ENCODE measurements at regions of chr5 and their contacts with region 1.

Region 1: DNA sequence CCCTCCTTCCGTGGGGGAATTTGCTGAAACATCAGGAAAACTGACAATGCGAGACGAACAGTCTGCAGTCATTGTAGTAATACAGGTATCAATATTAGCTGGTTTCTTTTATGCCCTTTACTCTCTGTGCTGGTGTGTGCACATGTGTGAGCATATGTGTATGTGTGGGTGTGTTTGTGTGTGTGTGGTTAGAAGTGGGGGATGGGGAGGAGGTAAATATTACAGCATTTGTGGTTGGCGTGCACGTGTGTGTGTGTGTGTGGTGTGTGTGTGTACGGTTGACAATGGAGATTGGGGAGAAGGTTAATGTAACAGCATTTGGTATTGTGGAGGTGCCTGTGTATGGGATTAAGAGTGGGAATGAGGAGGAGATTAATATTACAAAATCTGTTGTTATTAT is 219.4 kb downstream of the ADGRV1 start:
- DNase-seq: no peak
- H3K4me3 Mint-ChIP-seq: no peak overlapping the region
- H3K27ac Mint-ChIP-seq: no peak overlapping the region
- H3K4me1 Mint-ChIP-seq: no peaks in the 10 kb centered on the region
- H3K27me3 Mint-ChIP-seq: peaks cover 4% of the 10 kb centered on the region

Region 2: GRCh38 chr5:90548069-90548593 is 229.8 kb before region 1 on chr5:
- intact Hi-C with region 1: loop called (anchors 10 kb)
- DNase-seq: no peak
- H3K4me3 Mint-ChIP-seq: no peak overlapping the region
- H3K27ac Mint-ChIP-seq: no peak overlapping the region
- H3K4me1 Mint-ChIP-seq: no peaks in the 10 kb centered on the region
- H3K27me3 Mint-ChIP-seq: peaks cover 24% of the 10 kb centered on the region